PC-3 (cell line): ENCODE measurements at regions of chr6 and their contacts with region 1.

Region 1: GRCh38 chr6:87066449-87067333 is 28.2 kb downstream of the CGA start:
- DNase-seq: peak; percentile 56
- ATAC-seq: no peak; the same call in 1 of the 2 replicates
- H3K4me3 ChIP-seq: peak overlapping the region; percentile 52; the same call in 1 of the 2 replicates
- H3K27ac ChIP-seq: no peak overlapping the region
- H3K4me1 ChIP-seq: no peaks in the 10 kb centered on the region
- H3K27me3 ChIP-seq: 0 out of 2 replicates have a peak, but pooled peaks cover 5% of the 10 kb centered on the region
- CTCF ChIP-seq: peak; percentile 78

Region 2: GRCh38 chr6:87237804-87238203 is 171.1 kb after region 1 on chr6:
- CTCF ChIA-PET with region 1: no interaction called
- POLR2A ChIA-PET with region 1: no interaction called
- intact Hi-C with region 1: loop called (anchors 10 kb)
- DNase-seq: peak; percentile 29
- ATAC-seq: peak; percentile 22; the same call in 1 of the 2 replicates
- H3K4me3 ChIP-seq: no peak overlapping the region
- H3K27ac ChIP-seq: no peak overlapping the region
- H3K4me1 ChIP-seq: no peaks in the 10 kb centered on the region
- H3K27me3 ChIP-seq: no peaks in the 10 kb centered on the region
- CTCF ChIP-seq: peak; percentile 62